ENCODE measurements at regions of chr9 and their contacts with region 1.

Region 1: DNA sequence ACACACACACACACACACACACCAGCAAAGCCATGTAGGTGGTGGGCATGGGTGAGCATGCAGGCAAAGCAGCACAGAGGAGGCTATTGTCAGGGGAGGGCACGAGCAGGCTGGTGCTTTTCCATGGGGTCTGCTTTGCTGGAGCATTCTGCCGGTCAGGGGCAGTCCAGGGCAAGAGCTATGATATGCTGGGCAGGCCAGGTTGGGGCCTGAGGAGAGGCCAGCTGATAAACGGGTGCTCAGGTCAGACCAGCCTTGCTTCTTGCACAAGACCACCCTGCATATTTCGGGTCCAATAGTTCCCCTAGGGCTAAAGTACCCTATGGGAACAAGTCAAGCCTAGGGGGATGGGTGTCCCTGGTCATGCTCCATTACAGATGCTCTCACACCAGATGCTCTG is 254.0 kb upstream of the DMAC1 start:
- DNase-seq: peak; percentile 47
- H3K4me3 ChIP-seq: no peak overlapping the region
- H3K27ac ChIP-seq: no peak overlapping the region
- H3K4me1 ChIP-seq: no peaks in the 10 kb centered on the region
- H3K27me3 ChIP-seq: no peaks in the 10 kb centered on the region
- CTCF ChIP-seq: no peak
- EP300 ChIP-seq: no peak
- POLR2A ChIP-seq: no peak

Region 2: GRCh38 chr9:7982907-7983306 is 70.6 kb before region 1 on chr9:
- intact Hi-C with region 1: loop called (anchors 10 kb)
- DNase-seq: no peak
- H3K4me3 ChIP-seq: no peak overlapping the region
- H3K27ac ChIP-seq: no peak overlapping the region
- H3K4me1 ChIP-seq: no peaks in the 10 kb centered on the region
- H3K27me3 ChIP-seq: no peaks in the 10 kb centered on the region
- CTCF ChIP-seq: no peak
- EP300 ChIP-seq: no peak
- POLR2A ChIP-seq: no peak